HCT116 (cell line): ENCODE measurements at regions of chr2 and their contacts with region 1.

Region 1: DNA sequence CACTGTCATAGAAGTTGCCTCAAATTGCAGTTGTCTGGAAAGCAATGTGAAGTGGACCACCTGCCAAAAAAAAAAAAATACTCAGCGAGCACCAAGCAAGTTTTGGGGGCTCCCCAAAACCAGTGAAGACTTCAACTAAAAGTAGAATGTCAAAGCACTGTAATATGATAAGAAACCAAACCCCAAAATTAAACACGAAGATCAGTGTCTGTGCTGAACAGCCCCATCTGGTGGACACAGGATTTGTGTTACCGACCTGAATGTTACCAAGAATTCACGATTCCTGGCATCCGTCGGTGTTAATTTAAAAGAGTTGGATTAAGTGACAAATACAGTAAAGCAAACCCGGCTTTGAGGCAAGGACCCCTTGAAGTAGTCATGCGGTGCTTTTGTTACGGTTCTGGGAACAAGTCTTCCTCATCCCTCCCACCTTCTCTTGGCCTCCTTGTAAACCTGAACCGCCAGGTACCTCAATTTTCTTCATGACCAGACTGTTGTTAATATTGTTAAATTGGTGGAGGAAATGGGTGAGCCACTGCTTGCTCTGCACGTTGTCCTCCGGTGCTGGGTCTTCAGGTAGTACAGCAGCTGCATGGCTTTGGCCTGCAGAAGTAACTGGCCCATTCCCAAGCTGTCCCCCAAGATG is 31.3 kb upstream of the SSB start:
- DNase-seq: peak; percentile 28
- ATAC-seq: peak; percentile 70
- H3K4me3 ChIP-seq: no peak overlapping the region
- H3K27ac ChIP-seq: no peak overlapping the region
- H3K4me1 ChIP-seq: peaks cover 0 to 11% of the 10 kb centered on the region in 2 experiments; a peak in 3 of 4 replicates
- H3K27me3 ChIP-seq: no peaks in the 10 kb centered on the region
- CTCF ChIP-seq: peak; percentile 64 to 82 (median 69)
- POLR2A ChIP-seq: no peak
- RAD21 ChIP-seq: peak; percentile 69

Region 2: DNA sequence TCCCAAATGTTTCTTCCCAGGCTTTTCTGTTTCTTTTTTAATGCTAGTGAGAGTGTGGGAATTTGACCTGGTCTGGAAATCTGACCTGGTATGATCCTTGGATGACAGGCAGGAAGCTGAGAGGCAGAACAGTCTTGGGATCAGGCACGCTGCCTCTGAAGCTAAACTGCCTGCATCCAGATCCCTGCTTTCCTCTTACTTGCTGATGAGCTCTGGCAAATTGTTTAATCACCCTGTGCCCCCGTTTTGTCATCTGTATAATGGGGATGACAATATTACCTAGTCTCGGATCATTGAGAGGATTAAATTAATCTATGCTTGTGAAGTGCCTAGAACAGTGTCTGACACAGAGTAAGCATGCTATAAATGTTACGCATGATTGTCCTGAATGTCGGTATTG is 30.5 kb before region 1 on chr2:
- CTCF ChIA-PET with region 1: no interaction called
- POLR2A ChIA-PET with region 1: no interaction called
- RAD21 ChIA-PET with region 1: no interaction called
- intact Hi-C with region 1: loop called (anchors 1 kb)
- DNase-seq: no peak
- ATAC-seq: no peak
- H3K4me3 ChIP-seq: no peak overlapping the region
- H3K27ac ChIP-seq: no peak overlapping the region
- H3K4me1 ChIP-seq: peaks cover 10 to 36% of the 10 kb centered on the region in 2 experiments; a peak in 3 of 4 replicates
- H3K27me3 ChIP-seq: no peaks in the 10 kb centered on the region
- CTCF ChIP-seq: no peak
- POLR2A ChIP-seq: no peak
- RAD21 ChIP-seq: no peak